ENCODE measurements at regions of chr2 and their contacts with region 1.

Region 1: GRCh38 chr2:202046572-202046971 is 12.9 kb downstream of the FZD7 start:
- DNase-seq: no peak
- H3K4me3 ChIP-seq: no peak overlapping the region
- H3K4me3 Mint-ChIP-seq: no peak overlapping the region
- H3K27ac ChIP-seq: no peak overlapping the region
- H3K27ac Mint-ChIP-seq: no peak overlapping the region
- H3K4me1 ChIP-seq: no peaks in the 10 kb centered on the region
- H3K4me1 Mint-ChIP-seq: no peaks in the 10 kb centered on the region
- H3K27me3 ChIP-seq: no peaks in the 10 kb centered on the region
- H3K27me3 Mint-ChIP-seq: peaks cover 1 to 4% (median 2%) of the 10 kb centered on the region in 3 donors
- CTCF ChIP-seq: no peak

Region 2: DNA sequence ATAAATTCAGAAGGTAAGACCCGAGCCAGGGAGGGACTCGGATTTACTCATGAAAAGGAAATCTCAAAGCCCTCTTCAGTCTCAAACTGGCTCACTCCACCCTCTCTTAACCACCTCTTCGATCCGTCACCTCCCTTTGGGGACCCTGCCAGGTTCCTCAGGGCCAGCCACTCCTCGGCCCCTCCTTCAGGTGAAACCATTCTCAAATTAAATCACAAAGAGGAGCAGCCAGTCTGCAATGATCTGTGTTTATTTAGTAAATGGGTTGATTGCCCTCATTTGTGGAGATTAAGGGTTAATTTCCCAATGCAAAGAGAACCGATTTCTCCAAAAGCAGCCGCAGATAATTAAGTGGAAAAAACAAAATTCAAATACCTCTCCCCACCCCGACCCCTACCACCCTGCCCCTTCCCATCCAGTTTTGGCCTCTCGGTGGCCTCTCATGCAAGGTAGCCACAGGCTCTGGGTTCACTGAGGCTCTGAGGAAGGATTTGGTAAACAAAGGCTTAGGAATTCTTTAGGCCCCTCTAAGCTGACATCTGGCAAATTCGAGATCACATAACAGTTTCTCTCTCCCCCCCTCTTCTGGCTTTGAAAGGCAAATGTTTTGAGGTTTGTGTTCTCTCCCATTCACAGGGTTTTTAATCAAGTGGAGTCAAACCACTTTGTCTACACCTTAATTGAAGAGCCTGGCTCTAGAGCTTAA is 23.2 kb before region 1 on chr2:
- intact Hi-C with region 1: loop called in 1 of 2 experiments (anchors 2 kb)
- DNase-seq: no peak
- H3K4me3 ChIP-seq: no peak overlapping the region
- H3K4me3 Mint-ChIP-seq: no peak overlapping the region
- H3K27ac ChIP-seq: no peak overlapping the region
- H3K27ac Mint-ChIP-seq: peak overlapping the region in 1 of 7 donors; percentile 21
- H3K4me1 ChIP-seq: no peaks in the 10 kb centered on the region
- H3K4me1 Mint-ChIP-seq: no peaks in the 10 kb centered on the region
- H3K27me3 ChIP-seq: peaks cover 0 to 3% of the 10 kb centered on the region in 2 donors
- H3K27me3 Mint-ChIP-seq: peaks cover 2 to 12% (median 4%) of the 10 kb centered on the region in 3 donors
- CTCF ChIP-seq: no peak